ENCODE measurements at regions of chr14 and their contacts with region 1.

Region 1: DNA sequence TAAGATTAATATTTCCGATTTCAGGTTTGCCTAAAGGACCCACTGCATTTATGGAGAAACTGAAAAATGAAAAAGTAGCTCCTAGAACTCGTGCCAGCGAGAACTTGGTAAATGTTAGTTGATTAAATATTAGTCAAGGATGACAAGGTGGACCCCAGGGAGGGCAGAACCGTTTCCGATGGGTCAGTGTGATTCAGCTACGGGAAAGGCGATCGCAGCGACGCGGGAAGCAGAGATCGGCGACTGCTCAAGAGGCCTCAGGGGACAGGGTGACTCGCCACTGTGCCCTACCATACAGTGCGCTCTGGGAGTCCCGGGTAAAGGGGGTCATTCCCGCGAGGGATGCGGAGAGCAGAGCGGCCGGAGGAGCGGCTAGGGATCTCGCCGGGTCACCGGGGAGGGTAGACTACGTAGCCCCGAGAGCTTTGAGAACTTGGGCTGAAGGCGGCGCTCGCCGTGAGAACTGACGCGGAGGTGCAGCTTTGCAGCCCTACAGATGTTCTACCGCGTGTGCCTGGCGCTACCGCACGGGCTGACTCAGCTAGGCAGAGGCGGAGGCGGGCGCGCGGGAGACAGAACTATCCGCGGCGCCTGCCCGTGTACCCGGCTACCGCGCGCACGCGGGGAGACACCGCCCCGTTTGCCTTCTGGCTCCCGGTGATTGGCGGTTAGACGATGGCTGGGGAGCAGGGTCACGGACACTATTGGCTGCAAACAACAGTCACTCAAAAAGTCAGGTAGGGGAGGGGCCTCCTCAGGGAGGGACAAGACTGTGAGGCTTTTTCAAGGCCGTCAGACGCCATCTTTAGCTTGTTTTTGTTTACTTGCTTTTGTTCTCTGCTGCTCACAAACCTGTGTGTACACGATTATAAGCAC is 3.2 kb downstream of the C14orf93 start:
- DNase-seq: peak; percentile 98
- H3K4me3 Mint-ChIP-seq: peak overlapping the region; percentile 92
- H3K27ac Mint-ChIP-seq: peak overlapping the region; percentile 98
- H3K4me1 Mint-ChIP-seq: peaks cover 38% of the 10 kb centered on the region
- H3K27me3 Mint-ChIP-seq: no peaks in the 10 kb centered on the region

Region 2: GRCh38 chr14:22505697-22506377 is 500.9 kb before region 1 on chr14:
- intact Hi-C with region 1: no loop called
- DNase-seq: no peak
- H3K4me3 Mint-ChIP-seq: peak overlapping the region; percentile 92
- H3K27ac Mint-ChIP-seq: peak overlapping the region; percentile 100
- H3K4me1 Mint-ChIP-seq: peaks cover 65% of the 10 kb centered on the region
- H3K27me3 Mint-ChIP-seq: no peaks in the 10 kb centered on the region

Region 3: DNA sequence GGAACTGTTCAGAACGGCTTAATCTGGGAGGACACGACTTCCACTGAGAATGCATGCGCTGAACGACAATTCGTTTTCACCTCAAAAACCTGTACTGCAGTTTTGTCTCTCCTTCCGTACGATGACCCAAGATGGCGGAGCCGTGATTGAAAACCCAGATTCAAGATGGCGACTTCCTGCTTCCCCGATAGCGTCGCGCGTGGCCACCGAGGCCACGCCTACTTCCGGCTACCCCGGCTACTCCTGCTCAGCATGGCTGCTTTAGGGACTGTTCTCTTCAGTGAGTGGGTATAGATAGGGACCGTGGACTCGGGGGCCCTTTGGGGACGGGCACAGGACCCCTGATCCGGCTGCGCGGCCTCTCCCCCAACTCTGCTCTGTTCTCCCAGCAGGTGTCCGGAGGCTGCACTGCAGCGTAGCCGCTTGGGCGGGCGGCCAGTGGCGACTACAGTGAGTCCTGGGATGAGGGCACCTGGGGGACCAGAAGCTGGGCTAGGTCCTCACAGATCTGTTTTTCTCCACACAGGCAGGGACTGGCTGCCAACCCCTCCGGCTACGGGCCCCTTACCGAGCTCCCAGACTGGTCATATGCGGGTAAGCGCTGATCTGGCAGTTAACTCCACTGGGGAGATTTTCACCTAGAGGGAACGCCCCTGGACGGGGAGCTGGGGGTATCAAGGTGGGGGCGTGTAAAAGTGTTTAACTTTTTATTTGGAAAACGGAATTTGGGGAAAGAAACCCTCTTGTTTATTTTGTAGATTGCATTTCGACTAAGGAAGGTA is 176.9 kb before region 1 on chr14 and contains the start of gene MRPL52:
- intact Hi-C with region 1: no loop called
- DNase-seq: peak; percentile 81
- H3K4me3 Mint-ChIP-seq: peak within 1 kb of the TSS; percentile 94
- H3K27ac Mint-ChIP-seq: peak within 1 kb of the TSS; percentile 91
- H3K4me1 Mint-ChIP-seq: peaks cover 23% of the 10 kb centered on the region
- H3K27me3 Mint-ChIP-seq: no peaks in the 10 kb centered on the region
- total RNA-seq, gene MRPL52: 173 and 175 TPM in 2 replicates

Region 4: GRCh38 chr14:22986508-22987054 is 20.2 kb before region 1 on chr14:
- intact Hi-C with region 1: loop called (anchors 2 kb)
- DNase-seq: peak; percentile 78
- H3K4me3 Mint-ChIP-seq: no peak overlapping the region
- H3K27ac Mint-ChIP-seq: no peak overlapping the region
- H3K4me1 Mint-ChIP-seq: no peaks in the 10 kb centered on the region
- H3K27me3 Mint-ChIP-seq: no peaks in the 10 kb centered on the region

Region 5: DNA sequence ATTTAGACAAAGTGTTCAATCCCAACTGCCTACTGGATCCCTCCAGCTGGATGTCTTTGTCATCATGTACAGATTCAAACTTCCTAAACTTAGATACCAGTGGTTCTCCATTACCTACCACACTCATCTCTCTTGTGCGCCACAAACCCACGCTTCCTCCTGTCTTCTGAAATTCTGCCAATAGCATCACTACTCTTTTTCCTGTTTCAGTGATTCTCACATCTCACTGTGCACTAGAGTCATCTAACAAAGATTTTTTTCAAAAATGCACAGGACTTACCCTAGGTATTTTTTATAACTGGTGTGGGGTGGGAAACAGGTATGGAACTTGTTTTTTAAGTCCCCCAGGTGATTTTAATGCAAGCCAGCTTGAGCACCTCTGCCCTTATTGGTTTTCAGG is 22.0 kb after region 1 on chr14:
- intact Hi-C with region 1: loop called (anchors 1 kb)
- DNase-seq: no peak
- H3K4me3 Mint-ChIP-seq: peak overlapping the region; percentile 1
- H3K27ac Mint-ChIP-seq: peak overlapping the region; percentile 53
- H3K4me1 Mint-ChIP-seq: peaks cover 46% of the 10 kb centered on the region
- H3K27me3 Mint-ChIP-seq: no peaks in the 10 kb centered on the region

Region 6: GRCh38 chr14:23034483-23035302 is 27.9 kb after region 1 on chr14 and contains the start of gene PSMB5:
- intact Hi-C with region 1: loop called (anchors 1 kb)
- DNase-seq: peak; percentile 86
- H3K4me3 Mint-ChIP-seq: peak within 1 kb of the TSS; percentile 92
- H3K27ac Mint-ChIP-seq: peak within 1 kb of the TSS; percentile 88
- H3K4me1 Mint-ChIP-seq: peaks cover 22% of the 10 kb centered on the region
- H3K27me3 Mint-ChIP-seq: peaks cover 2% of the 10 kb centered on the region
- total RNA-seq, gene PSMB5: 124 and 134 TPM in 2 replicates

Region 7: GRCh38 chr14:23057757-23058653 is 51.2 kb after region 1 on chr14:
- intact Hi-C with region 1: loop called (anchors 5 kb)
- DNase-seq: peak; percentile 79
- H3K4me3 Mint-ChIP-seq: peak overlapping the region; percentile 84
- H3K27ac Mint-ChIP-seq: peak overlapping the region; percentile 51
- H3K4me1 Mint-ChIP-seq: peaks cover 16% of the 10 kb centered on the region
- H3K27me3 Mint-ChIP-seq: peaks cover 7% of the 10 kb centered on the region

Region 8: DNA sequence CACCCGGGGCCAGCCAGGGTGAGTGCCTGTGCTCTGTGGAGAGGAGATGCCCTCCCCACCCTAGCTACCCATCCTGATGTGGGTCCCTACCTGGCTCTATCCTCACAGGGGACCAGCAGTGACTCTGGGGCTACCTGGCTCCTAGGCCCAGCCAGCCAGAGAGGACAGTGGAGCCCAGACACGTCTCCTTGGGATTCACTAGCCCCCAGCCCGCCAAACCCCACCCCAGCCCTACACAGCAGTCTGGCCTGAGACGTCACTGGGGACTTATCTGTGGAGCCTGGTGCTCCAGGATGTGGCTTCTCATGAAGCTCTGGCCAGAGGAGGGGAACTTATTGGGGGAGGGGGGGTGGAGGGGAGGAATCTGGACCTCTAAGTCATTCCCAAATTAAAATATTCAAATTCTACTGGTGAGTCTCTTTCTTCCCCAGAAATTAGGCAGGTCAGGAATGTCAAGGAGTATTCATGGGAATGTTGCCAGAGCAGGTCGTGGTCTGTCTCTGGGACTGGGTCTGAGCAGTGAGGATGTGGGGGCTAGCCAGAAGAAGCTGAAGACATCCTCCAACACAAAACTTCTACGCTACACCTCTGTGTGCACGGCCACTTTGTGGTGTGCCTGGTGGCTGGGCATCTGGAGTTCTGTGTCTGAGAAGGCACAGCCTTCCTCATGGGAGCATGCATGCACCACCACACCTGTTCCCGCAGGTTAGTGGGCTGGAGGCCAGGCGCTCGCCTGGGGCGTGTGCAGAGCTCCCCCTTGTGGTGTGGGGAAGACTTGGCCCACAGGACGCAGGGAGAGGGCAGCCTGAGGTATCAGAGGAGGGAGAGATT is 372.8 kb after region 1 on chr14:
- intact Hi-C with region 1: no loop called
- DNase-seq: peak; percentile 43
- H3K4me3 Mint-ChIP-seq: no peak overlapping the region
- H3K27ac Mint-ChIP-seq: no peak overlapping the region
- H3K4me1 Mint-ChIP-seq: no peaks in the 10 kb centered on the region
- H3K27me3 Mint-ChIP-seq: no peaks in the 10 kb centered on the region